CD14-positive monocyte (primary cell): ENCODE measurements at regions of chr9 and their contacts with region 1.

Region 1: GRCh38 chr9:127224178-127224882 is 40.2 kb upstream of the GARNL3 start:
- DNase-seq: peak; percentile 63 to 75 (median 72)
- H3K4me3 ChIP-seq: peak overlapping the region; percentile 28 to 77 (median 50)
- H3K4me3 Mint-ChIP-seq: peak overlapping the region; percentile 81 to 85
- H3K27ac ChIP-seq: peak overlapping the region in 1 of 2 donors; percentile 39
- H3K27ac Mint-ChIP-seq: peak overlapping the region in 6 of 7 donors; percentile 76 to 91 (median 82)
- H3K4me1 ChIP-seq: peaks cover 17 to 25% of the 10 kb centered on the region in 2 donors
- H3K4me1 Mint-ChIP-seq: peaks cover 21% of the 10 kb centered on the region
- H3K27me3 ChIP-seq: peaks cover 15 to 35% of the 10 kb centered on the region in 2 donors
- H3K27me3 Mint-ChIP-seq: peaks cover 37 to 51% (median 43%) of the 10 kb centered on the region in 3 donors
- CTCF ChIP-seq: no peak

Region 2: DNA sequence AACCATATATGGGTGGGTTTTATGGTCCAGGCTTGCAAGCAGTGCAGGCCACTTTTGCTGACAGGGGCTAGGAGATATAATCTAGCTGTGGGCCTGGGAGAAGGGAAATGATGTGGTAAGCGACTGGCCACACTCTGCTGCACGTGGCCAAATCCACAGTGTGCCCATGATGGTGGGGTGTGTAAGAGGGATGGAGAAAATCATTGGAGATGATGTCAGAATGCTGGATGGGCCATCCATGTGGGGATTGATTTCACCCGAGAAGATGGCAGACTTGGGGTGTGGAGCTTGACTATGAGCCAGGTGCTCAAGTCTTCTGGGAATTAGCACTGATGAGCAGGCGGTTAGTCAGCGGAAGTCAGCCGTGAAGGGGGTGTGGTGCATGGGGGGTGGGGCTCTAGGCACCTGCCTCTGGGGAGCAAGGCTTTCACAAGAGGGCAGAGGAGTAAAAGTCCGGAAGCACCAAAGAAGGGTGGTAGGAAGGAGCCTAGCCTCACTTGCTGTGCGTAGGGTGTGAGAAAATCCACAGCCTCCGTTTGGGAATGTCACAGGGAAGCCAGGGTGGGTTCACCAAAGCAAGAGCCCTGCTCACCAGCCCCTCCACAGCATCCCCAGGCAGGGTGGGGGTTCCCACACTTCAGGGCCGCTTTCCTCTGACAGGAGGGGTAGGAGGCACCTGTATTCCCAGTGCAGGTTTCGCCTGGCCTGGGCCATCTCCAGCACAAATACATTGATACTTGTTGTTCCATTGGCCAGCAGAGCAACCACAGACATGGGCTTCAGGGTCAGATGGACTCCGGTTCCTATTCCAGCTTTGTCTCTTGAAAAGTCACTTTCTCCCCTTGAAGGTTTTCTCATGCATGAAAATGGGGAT is 57.4 kb before region 1 on chr9:
- intact Hi-C with region 1: no loop called
- DNase-seq: no peak
- H3K4me3 ChIP-seq: no peak overlapping the region
- H3K4me3 Mint-ChIP-seq: no peak overlapping the region
- H3K27ac ChIP-seq: no peak overlapping the region
- H3K27ac Mint-ChIP-seq: no peak overlapping the region
- H3K4me1 ChIP-seq: no peaks in the 10 kb centered on the region
- H3K4me1 Mint-ChIP-seq: peaks cover 19% of the 10 kb centered on the region
- H3K27me3 ChIP-seq: no peaks in the 10 kb centered on the region
- H3K27me3 Mint-ChIP-seq: peaks cover 0 to 2% (median 2%) of the 10 kb centered on the region in 3 donors
- CTCF ChIP-seq: no peak

Region 3: DNA sequence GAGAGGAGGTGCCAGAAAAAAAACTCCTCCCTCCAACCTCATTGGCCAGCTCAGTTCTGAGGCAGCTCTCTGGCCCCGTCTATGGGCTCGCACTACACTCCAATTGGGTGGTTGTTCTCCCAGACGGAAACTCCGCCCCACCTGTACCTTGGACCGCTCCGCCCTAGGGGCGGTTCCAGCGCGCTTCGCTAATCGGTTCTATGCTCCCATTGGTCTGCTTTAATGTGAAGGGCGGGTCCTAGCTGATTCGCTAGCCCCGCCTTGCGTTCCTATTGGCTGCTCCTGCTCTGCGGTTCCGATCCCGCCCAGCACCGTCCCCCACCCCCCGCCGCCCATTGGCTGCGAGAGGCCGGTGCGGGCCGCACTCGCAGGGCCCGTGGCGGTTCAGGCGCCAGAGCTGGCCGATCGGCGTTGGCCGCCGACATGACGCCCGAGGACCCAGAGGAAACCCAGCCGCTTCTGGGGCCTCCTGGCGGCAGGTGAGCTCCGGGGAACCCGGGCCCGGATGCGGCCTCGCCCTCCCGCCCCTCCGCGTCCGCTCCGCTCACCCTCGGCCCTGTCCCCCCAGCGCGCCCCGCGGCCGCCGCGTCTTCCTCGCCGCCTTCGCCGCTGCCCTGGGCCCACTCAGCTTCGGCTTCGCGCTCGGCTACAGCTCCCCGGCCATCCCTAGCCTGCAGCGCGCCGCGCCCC is 172.6 kb after region 1 on chr9 and contains the start of gene SLC2A8:
- intact Hi-C with region 1: loop called (anchors 5 kb)
- DNase-seq: peak; percentile 99 to 100 (median 99)
- H3K4me3 ChIP-seq: peak within 1 kb of the TSS; percentile 42 to 72 (median 50)
- H3K4me3 Mint-ChIP-seq: peak within 1 kb of the TSS; percentile 84 to 89
- H3K27ac ChIP-seq: no peak within 1 kb of the TSS
- H3K27ac Mint-ChIP-seq: peak within 1 kb of the TSS in 3 of 7 donors; percentile 30 to 73 (median 71)
- H3K4me1 ChIP-seq: peaks cover 23 to 27% of the 10 kb centered on the region in 2 donors
- H3K4me1 Mint-ChIP-seq: peaks cover 21% of the 10 kb centered on the region
- H3K27me3 ChIP-seq: peaks cover 0 to 7% of the 10 kb centered on the region in 2 donors
- H3K27me3 Mint-ChIP-seq: peaks cover 12 to 29% (median 15%) of the 10 kb centered on the region in 3 donors
- CTCF ChIP-seq: no peak
- polyA plus RNA-seq, gene SLC2A8: 6.6 to 8.7 (median 6.6) TPM

Region 4: DNA sequence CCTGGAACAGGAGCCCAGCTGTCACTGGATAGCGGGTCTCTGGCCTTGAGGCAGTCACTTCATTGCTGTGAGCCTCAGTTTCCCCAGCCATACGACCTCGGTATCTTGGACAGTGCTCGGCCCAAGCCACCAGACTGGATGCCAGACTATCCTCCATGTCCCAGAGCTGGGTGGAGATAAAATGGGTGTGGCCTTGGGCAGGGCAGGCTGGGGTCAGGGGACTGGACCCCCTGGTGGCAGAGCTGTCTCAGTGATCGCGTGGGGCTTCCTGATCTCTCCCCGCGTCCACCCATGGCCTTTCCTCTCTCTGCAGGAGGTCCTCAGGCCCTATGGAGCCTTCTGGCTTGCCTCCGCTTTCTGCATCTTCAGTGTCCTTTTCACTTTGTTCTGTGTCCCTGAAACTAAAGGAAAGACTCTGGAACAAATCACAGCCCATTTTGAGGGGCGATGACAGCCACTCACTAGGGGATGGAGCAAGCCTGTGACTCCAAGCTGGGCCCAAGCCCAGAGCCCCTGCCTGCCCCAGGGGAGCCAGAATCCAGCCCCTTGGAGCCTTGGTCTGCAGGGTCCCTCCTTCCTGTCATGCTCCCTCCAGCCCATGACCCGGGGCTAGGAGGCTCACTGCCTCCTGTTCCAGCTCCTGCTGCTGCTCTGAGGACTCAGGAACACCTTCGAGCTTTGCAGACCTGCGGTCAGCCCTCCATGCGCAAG is 182.6 kb after region 1 on chr9:
- intact Hi-C with region 1: no loop called
- DNase-seq: no peak
- H3K4me3 ChIP-seq: no peak overlapping the region
- H3K4me3 Mint-ChIP-seq: no peak overlapping the region
- H3K27ac ChIP-seq: no peak overlapping the region
- H3K27ac Mint-ChIP-seq: no peak overlapping the region
- H3K4me1 ChIP-seq: peaks cover 16 to 17% of the 10 kb centered on the region in 2 donors
- H3K4me1 Mint-ChIP-seq: peaks cover 14% of the 10 kb centered on the region
- H3K27me3 ChIP-seq: no peaks in the 10 kb centered on the region
- H3K27me3 Mint-ChIP-seq: peaks cover 0 to 2% (median 2%) of the 10 kb centered on the region in 3 donors
- CTCF ChIP-seq: no peak